ENCODE measurements at regions of chr12 and their contacts with region 1.

Region 1: GRCh38 chr12:117836999-117837736 is 131.6 kb downstream of the KSR2 start:
- DNase-seq: peak; percentile 48 to 78 (median 66)
- ATAC-seq: peak; percentile 57
- H3K4me3 ChIP-seq: no peak overlapping the region
- H3K4me3 Mint-ChIP-seq: peak overlapping the region; percentile 33
- H3K27ac ChIP-seq: no peak overlapping the region
- H3K27ac Mint-ChIP-seq: no peak overlapping the region
- H3K4me1 ChIP-seq: no peaks in the 10 kb centered on the region
- H3K4me1 Mint-ChIP-seq: peaks cover 9% of the 10 kb centered on the region
- H3K27me3 ChIP-seq: no peaks in the 10 kb centered on the region
- H3K27me3 Mint-ChIP-seq: peaks cover 13% of the 10 kb centered on the region
- CTCF ChIP-seq: peak; percentile 87

Region 2: DNA sequence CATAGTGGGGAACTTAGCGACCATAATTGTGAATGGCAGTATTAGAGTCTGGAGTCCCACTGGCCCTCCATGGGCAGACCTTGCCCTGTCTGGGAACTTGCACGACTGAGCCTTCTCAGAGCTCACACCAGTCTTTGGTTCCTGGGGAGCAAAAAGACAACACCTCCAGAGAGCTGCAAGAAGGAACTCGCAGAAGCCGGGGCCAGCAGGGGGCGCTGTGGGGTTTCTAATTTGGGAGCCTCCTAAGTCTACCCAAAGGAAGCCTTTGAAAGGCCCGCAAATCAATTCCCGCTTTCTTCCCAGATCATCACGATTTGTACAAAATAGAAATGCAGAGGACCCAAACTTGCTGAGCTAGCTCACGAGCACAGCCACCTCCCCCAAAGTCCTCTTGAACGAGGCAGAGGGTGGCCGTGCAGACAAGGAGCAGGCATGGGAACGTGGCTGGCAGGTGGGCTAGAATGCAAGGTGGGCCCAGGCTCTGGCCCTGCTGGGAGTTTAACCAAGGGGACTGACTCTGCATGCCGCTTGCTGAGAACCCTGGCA is 600.6 kb before region 1 on chr12:
- CTCF ChIA-PET with region 1: interaction called, 5 read pairs
- POLR2A ChIA-PET with region 1: no interaction called
- intact Hi-C with region 1: loop called in 1 of 2 experiments (anchors 2 kb)
- DNase-seq: peak; percentile 29 to 80 (median 60)
- ATAC-seq: no peak
- H3K4me3 ChIP-seq: no peak overlapping the region
- H3K4me3 Mint-ChIP-seq: no peak overlapping the region
- H3K27ac ChIP-seq: no peak overlapping the region
- H3K27ac Mint-ChIP-seq: no peak overlapping the region
- H3K4me1 ChIP-seq: no peaks in the 10 kb centered on the region
- H3K4me1 Mint-ChIP-seq: no peaks in the 10 kb centered on the region
- H3K27me3 ChIP-seq: peaks cover 0 to 2% of the 10 kb centered on the region in 2 experiments
- H3K27me3 Mint-ChIP-seq: peaks cover 17% of the 10 kb centered on the region
- CTCF ChIP-seq: peak; percentile 65

Region 3: DNA sequence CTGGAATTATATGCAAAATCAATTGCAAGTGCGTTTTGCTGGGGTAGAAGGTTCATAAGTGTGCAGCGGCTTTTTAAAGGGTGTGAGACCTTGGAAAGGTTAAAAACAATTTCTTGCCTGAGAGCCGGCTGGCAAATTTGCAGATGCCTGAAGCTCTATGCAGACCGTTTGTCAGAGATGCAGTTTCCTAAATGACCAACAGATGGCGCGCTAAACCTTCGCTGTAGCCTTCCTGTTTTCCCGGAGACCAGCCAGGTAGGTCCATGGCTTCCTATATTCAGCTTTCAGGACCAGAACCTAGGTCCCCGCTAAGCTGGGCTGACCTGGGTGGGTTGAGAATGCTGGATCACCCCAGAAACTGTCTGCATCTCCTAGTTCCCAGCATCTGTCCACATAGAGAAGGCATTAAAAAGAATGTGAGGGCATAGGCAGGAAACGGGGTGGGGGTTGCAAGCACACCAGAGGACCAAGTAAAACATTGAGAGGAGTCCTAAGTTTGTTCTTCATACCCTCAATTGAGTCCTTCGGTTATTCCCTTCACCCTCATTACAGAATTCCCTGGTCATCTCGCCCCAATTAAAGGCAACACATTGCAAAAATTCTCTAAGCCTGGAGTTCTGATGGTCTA is 470.0 kb before region 1 on chr12:
- CTCF ChIA-PET with region 1: interaction called, 12 read pairs
- POLR2A ChIA-PET with region 1: no interaction called
- intact Hi-C with region 1: loop called in 1 of 2 experiments (anchors 5 kb)
- DNase-seq: peak in 6 of 9 experiments; percentile 14 to 44 (median 29)
- ATAC-seq: no peak
- H3K4me3 ChIP-seq: no peak overlapping the region
- H3K4me3 Mint-ChIP-seq: no peak overlapping the region
- H3K27ac ChIP-seq: no peak overlapping the region
- H3K27ac Mint-ChIP-seq: no peak overlapping the region
- H3K4me1 ChIP-seq: no peaks in the 10 kb centered on the region
- H3K4me1 Mint-ChIP-seq: no peaks in the 10 kb centered on the region
- H3K27me3 ChIP-seq: peaks cover 0 to 2% of the 10 kb centered on the region in 2 experiments
- H3K27me3 Mint-ChIP-seq: peaks cover 38% of the 10 kb centered on the region
- CTCF ChIP-seq: no peak

Region 4: DNA sequence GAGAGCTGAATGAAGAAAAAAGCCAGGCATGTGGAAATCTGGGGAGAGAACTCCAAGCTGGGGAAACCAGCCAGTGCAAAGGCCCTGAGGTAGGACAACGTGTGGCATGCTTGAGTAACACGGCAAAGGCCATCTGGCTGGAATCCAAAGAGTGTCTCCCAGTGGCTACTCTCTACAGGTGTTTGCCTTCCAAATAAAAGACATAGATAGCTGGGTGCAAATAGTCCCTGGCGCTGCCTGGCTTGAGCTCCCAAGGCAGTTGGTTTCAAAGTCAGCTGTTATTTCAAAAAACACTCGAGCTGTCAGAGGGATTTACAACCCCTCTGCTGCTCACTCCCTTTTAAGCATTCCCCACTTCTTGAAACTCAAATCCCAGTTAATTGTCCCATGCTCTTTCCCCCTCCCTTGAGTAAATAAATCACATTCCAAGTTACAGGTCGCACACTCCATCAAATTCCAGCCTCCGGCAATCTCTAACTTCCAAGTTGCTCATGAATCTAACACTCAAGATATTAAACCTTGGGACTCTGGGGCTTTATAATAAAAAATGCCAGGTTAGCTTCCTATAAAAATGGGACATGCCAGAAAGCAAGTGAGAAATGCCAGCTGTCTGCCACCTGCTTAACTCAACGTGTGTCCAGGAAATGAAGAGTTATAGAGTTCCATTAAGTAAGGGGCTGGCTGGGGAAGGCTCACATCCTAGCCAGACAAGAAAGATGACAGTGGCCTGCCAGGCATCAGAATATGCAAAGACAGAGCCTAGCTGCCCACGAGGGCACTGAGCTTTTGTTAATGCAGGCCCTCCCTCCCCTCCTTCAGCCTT is 342.1 kb before region 1 on chr12:
- CTCF ChIA-PET with region 1: no interaction called
- POLR2A ChIA-PET with region 1: no interaction called
- intact Hi-C with region 1: no loop called
- DNase-seq: no peak
- ATAC-seq: no peak
- H3K4me3 ChIP-seq: no peak overlapping the region
- H3K4me3 Mint-ChIP-seq: no peak overlapping the region
- H3K27ac ChIP-seq: no peak overlapping the region
- H3K27ac Mint-ChIP-seq: no peak overlapping the region
- H3K4me1 ChIP-seq: no peaks in the 10 kb centered on the region
- H3K4me1 Mint-ChIP-seq: no peaks in the 10 kb centered on the region
- H3K27me3 ChIP-seq: no peaks in the 10 kb centered on the region
- H3K27me3 Mint-ChIP-seq: no peaks in the 10 kb centered on the region
- CTCF ChIP-seq: no peak

Region 5: GRCh38 chr12:117857632-117858612 is 20.8 kb after region 1 on chr12:
- CTCF ChIA-PET with region 1: interaction called, 14 read pairs
- POLR2A ChIA-PET with region 1: no interaction called
- intact Hi-C with region 1: no loop called
- DNase-seq: peak in 6 of 9 experiments; percentile 15 to 54 (median 44)
- ATAC-seq: no peak
- H3K4me3 ChIP-seq: no peak overlapping the region
- H3K4me3 Mint-ChIP-seq: no peak overlapping the region
- H3K27ac ChIP-seq: no peak overlapping the region
- H3K27ac Mint-ChIP-seq: no peak overlapping the region
- H3K4me1 ChIP-seq: no peaks in the 10 kb centered on the region
- H3K4me1 Mint-ChIP-seq: no peaks in the 10 kb centered on the region
- H3K27me3 ChIP-seq: no peaks in the 10 kb centered on the region
- H3K27me3 Mint-ChIP-seq: peaks cover under 1% of the 10 kb centered on the region
- CTCF ChIP-seq: peak; percentile 63

Measured in CD8-positive, alpha-beta T cell (primary cell).